PC-9 (cell line): ENCODE measurements at regions of chr12 and their contacts with region 1.

Region 1: DNA sequence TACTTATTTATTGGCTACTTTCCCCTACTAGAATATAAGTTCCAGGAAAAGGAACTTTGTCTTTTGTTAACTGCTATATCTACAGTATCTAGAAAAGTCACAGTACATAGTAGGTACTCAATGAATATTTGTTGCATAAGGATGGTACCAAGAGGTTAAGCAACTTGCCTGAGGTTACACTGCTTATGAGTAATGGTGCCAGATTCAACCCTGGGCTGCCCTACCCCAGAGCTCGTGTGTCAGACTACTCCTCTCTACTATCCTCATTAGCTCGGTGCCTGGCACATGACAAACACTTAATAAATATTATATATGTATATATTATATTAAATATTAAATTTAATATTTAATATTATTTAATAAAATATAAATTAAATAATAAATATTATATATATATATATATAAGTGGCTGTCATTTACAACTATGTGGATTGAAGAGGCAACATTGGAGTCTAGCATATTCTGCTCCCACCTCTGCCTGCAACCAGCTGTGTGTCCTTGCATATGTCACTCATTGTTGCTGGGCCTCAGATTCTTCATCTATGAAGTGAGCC is 25.4 kb downstream of the UTP20 start:
- DNase-seq: no peak
- H3K4me3 ChIP-seq: no peak overlapping the region
- H3K27ac ChIP-seq: no peak overlapping the region
- H3K4me1 ChIP-seq: no peaks in the 10 kb centered on the region
- H3K27me3 ChIP-seq: no peaks in the 10 kb centered on the region
- CTCF ChIP-seq: no peak

Region 2: DNA sequence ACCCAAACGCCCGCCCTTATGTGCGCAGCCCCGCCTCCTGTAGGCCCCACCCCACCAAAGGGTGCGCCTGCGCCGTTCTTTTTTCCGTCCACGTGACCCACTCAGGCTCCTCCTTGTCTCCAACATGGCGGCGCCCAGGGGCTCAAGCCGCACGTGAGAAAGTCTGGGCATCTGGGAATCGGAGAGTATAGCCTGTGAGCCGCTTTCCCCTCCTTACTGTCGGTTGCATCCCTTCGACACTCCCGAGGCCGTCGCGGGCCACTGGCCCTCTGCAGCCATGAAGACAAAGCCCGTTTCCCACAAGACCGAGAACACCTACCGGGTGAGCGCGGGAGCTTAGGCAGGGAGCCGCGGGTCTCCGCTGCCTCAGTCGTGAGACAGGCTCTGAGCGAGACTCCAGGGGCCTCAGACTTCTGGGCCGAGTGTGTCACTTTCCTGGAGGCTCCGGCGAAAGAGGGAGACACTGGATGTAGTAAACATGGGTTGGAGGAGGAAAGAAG is 25.2 kb before region 1 on chr12 and contains the start of gene UTP20:
- CTCF ChIA-PET with region 1: no interaction called
- POLR2A ChIA-PET with region 1: no interaction called
- intact Hi-C with region 1: loop called (anchors 1 kb)
- DNase-seq: peak; percentile 71 to 90
- H3K4me3 ChIP-seq: peak within 1 kb of the TSS; percentile 99
- H3K27ac ChIP-seq: 0 out of 2 replicates have a peak within 1 kb of the TSS, but pooled peaks have one; percentile 17
- H3K4me1 ChIP-seq: peaks cover 6% of the 10 kb centered on the region; the same call in 1 of the 2 replicates
- H3K27me3 ChIP-seq: peaks cover 4% of the 10 kb centered on the region; the same call in 1 of the 2 replicates
- CTCF ChIP-seq: no peak
- total RNA-seq, gene UTP20: 11.4 and 14.1 TPM in 2 replicates

Region 3: DNA sequence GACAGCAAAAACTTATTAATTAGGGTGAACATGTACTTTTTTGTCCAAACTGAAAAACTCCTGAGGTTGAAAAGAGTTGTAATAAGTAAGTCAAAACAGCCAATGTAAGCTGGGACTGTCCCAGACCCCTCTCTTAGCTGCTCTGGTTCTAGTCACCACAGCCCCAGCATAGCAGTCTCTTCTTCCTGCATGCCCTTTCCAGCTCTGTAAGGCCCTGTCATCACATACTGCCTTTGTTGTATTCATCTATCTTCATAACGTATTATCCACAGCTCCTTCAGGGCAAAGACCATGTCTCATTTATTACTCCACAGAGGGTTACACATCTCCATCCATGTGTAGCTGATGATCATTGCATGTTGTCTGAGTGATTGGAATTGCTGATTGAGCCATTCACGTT is 31.1 kb after region 1 on chr12:
- CTCF ChIA-PET with region 1: no interaction called
- POLR2A ChIA-PET with region 1: no interaction called
- intact Hi-C with region 1: no loop called
- DNase-seq: no peak
- H3K4me3 ChIP-seq: no peak overlapping the region
- H3K27ac ChIP-seq: no peak overlapping the region
- H3K4me1 ChIP-seq: no peaks in the 10 kb centered on the region
- H3K27me3 ChIP-seq: no peaks in the 10 kb centered on the region
- CTCF ChIP-seq: no peak

Region 4: DNA sequence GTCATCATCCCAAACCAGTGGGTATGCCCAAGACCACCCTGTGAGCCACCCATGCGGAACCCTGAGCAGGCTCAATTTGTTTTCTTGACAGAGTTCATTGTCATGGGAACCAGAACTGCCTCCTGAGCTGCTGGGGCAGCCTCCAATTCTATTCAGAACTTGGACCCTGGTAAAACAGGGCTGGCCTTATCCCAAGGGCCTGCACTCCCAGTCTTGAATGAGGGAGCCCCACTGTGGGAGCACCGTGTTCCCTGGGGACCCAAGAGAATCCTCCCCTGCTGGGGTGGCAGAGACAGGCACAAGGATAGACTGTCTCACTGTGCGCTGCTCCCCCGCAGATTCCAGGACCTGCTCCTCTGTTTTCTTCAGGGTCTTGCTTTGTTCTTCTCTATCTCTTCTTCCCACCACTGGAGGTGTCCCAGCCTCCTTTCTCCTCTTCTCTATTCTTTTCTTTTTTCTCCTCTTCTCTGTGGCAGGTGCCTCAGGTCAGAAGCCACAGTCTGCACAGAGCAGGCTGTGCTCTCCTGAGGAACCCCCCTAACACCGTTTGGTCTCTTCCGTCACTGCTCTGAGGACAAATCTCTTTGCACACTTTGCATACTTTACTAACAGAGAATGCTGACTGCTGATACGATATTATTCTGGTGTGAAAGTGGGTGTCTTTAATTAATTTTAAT is 360.9 kb after region 1 on chr12:
- CTCF ChIA-PET with region 1: no interaction called
- POLR2A ChIA-PET with region 1: no interaction called
- intact Hi-C with region 1: no loop called
- DNase-seq: no peak
- H3K4me3 ChIP-seq: no peak overlapping the region
- H3K27ac ChIP-seq: no peak overlapping the region
- H3K4me1 ChIP-seq: no peaks in the 10 kb centered on the region
- H3K27me3 ChIP-seq: no peaks in the 10 kb centered on the region
- CTCF ChIP-seq: no peak